SK-N-SH (cell line): ENCODE measurements at regions of chr15 and their contacts with region 1.

Region 1: DNA sequence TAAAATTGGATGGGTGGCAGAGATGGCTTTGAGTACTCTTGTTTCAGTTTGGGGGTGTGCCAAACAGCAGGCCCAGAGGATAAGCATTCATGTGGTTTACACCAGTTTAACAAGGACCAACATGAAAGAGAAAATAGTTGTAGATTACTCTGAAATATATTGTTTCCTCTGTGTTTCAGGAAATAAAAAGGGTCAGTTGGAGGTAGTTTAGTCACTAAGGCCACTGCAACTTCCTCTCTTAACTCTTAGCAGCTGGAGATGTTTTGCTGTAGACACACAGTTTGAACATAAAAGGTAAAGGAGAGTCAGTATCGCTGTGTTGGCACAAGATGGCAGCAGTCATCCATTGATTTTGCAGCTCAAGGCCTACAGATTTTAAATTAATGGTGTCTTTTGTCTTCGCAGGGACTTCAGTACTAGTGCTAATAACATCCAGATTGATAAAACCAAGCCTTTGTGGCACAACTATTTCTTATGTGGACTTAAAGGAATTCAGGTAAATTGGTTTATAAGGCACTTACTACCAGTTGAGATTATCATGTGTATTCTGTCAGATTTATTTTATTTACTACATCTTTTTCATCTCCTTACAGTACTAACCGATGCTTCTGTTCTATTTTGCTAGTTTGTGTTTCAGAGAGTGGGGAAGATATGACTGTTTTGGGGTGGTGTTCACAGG is 65.5 kb downstream of the GALK2 start:
- DNase-seq: peak; percentile 44
- H3K4me3 ChIP-seq: no peak overlapping the region; a peak in 1 of 4 replicates
- H3K27ac ChIP-seq: peak overlapping the region; percentile 30 to 86; a peak in 3 of 4 replicates
- H3K4me1 ChIP-seq: peaks cover 28 to 33% of the 10 kb centered on the region in 2 experiments; a peak in 3 of 4 replicates
- H3K27me3 ChIP-seq: no peaks in the 10 kb centered on the region
- CTCF ChIP-seq: peak; percentile 92
- EP300 ChIP-seq: no peak; a peak in 1 of 4 replicates
- RAD21 ChIP-seq: peak; percentile 99

Region 2: DNA sequence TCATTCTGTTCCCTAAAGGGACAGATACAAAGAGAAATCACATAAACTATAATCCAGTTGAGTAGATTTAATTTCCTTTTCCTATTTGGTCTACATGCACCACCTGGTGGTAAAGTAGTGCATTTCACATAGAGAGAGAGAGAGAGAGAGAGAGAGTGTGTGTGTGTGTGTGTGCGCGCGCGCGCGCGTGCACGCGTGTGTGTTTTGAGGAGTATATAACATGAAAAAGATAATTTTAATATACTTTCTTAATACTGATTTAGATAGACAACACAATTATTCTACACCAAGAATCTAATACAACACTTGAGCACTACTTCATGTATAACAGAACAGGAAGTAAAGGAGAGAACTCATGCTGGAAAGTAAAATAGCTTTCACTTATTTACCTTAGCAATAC is 186.4 kb after region 1 on chr15:
- CTCF ChIA-PET with region 1: interaction called, 33 read pairs
- POLR2A ChIA-PET with region 1: interaction called, 3 read pairs
- DNase-seq: peak; percentile 23
- H3K4me3 ChIP-seq: no peak overlapping the region
- H3K27ac ChIP-seq: no peak overlapping the region
- H3K4me1 ChIP-seq: peaks cover 3 to 4% of the 10 kb centered on the region in 2 experiments; a peak in 2 of 4 replicates
- H3K27me3 ChIP-seq: no peaks in the 10 kb centered on the region
- CTCF ChIP-seq: peak; percentile 92
- EP300 ChIP-seq: no peak
- RAD21 ChIP-seq: peak; percentile 71

Region 3: DNA sequence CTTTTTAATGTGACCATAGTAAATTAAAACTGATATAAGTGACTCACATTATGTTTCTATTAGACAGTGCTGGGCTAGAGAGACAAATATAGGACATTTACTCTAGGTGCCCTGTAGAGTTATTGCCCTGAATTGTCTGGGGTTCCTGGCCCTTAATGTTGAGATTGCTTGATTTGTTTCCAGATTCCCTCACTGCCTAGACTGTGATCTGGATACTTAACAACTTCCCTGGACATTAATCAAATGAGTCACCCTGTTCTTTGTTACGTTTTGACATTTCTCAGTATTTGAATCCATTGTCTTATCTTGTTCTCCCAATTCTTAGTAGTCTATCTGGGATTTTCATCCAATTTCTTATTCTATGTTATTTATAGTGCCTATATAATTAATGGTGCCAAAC is 451.0 kb after region 1 on chr15:
- CTCF ChIA-PET with region 1: interaction called, 15 read pairs
- POLR2A ChIA-PET with region 1: no interaction called
- DNase-seq: no peak
- H3K4me3 ChIP-seq: no peak overlapping the region
- H3K27ac ChIP-seq: peak overlapping the region in 1 of 2 experiments; percentile 94; a peak in 2 of 4 replicates
- H3K4me1 ChIP-seq: peaks cover 0 to 9% of the 10 kb centered on the region in 2 experiments; a peak in 2 of 4 replicates
- H3K27me3 ChIP-seq: no peaks in the 10 kb centered on the region
- CTCF ChIP-seq: no peak
- EP300 ChIP-seq: no peak
- RAD21 ChIP-seq: no peak

Region 4: GRCh38 chr15:49901996-49902684 is 666.6 kb after region 1 on chr15:
- CTCF ChIA-PET with region 1: interaction called, 22 read pairs
- POLR2A ChIA-PET with region 1: no interaction called
- DNase-seq: no peak
- H3K4me3 ChIP-seq: no peak overlapping the region
- H3K27ac ChIP-seq: no peak overlapping the region
- H3K4me1 ChIP-seq: no peaks in the 10 kb centered on the region; a peak in 1 of 4 replicates
- H3K27me3 ChIP-seq: no peaks in the 10 kb centered on the region
- CTCF ChIP-seq: peak; percentile 38
- EP300 ChIP-seq: no peak
- RAD21 ChIP-seq: peak; percentile 60

Region 5: GRCh38 chr15:50051803-50052419 is 816.3 kb after region 1 on chr15:
- CTCF ChIA-PET with region 1: interaction called, 59 read pairs
- POLR2A ChIA-PET with region 1: no interaction called
- DNase-seq: peak; percentile 52
- H3K4me3 ChIP-seq: no peak overlapping the region; a peak in 1 of 4 replicates
- H3K27ac ChIP-seq: no peak overlapping the region
- H3K4me1 ChIP-seq: peaks cover 0 to 2% of the 10 kb centered on the region in 2 experiments; a peak in 1 of 4 replicates
- H3K27me3 ChIP-seq: no peaks in the 10 kb centered on the region
- CTCF ChIP-seq: peak; percentile 71
- EP300 ChIP-seq: no peak
- RAD21 ChIP-seq: peak; percentile 93